A673 (cell line): ENCODE measurements at regions of chr4 and their contacts with region 1.

Region 1: GRCh38 chr4:106315968-106316772 is at the starts of genes AIMP1 and TBCK:
- DNase-seq: peak; percentile 95
- H3K4me3 ChIP-seq: peak within 1 kb of the TSS; percentile 66
- H3K27ac ChIP-seq: peak within 1 kb of the TSS; percentile 98
- H3K4me1 ChIP-seq: peaks cover 28% of the 10 kb centered on the region
- H3K27me3 ChIP-seq: no peaks in the 10 kb centered on the region
- CTCF ChIP-seq: no peak
- total RNA-seq, gene AIMP1: 71.1 and 74.8 TPM in 2 replicates
- total RNA-seq, gene TBCK: 25.5 and 28.7 TPM in 2 replicates

Region 2: DNA sequence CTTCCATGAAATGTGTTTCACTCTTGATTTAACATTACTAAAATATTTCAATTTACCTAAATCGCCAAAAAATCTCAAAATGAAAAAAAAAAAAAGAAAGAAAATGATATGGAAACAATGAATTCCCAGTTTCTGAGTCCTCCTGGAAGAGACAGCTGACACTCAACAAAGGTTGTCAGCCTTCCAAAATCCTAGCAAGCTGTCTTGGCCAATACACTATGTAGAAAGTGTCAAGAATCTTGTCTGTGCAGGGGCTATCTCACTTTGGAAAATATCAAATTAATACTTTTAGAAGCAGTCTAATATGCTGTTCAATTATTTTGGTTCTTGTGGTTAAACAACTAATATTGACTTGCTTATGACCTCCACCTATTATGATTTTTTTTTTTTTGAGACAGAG is 711.2 kb after region 1 on chr4:
- CTCF ChIA-PET with region 1: no interaction called
- POLR2A ChIA-PET with region 1: no interaction called
- intact Hi-C with region 1: loop called (anchors 10 kb)
- DNase-seq: peak; percentile 51
- H3K4me3 ChIP-seq: peak overlapping the region; percentile 36
- H3K27ac ChIP-seq: peak overlapping the region; percentile 73
- H3K4me1 ChIP-seq: peaks cover 65% of the 10 kb centered on the region
- H3K27me3 ChIP-seq: no peaks in the 10 kb centered on the region
- CTCF ChIP-seq: no peak